ENCODE measurements at regions of chr7 and their contacts with region 1.

Region 1: GRCh38 chr7:38257350-38257677 is 16.1 kb downstream of the TARP start:
- DNase-seq: no peak
- H3K4me3 Mint-ChIP-seq: no peak overlapping the region
- H3K27ac Mint-ChIP-seq: no peak overlapping the region
- H3K4me1 Mint-ChIP-seq: no peaks in the 10 kb centered on the region
- H3K27me3 Mint-ChIP-seq: peaks cover 84% of the 10 kb centered on the region
- CTCF ChIP-seq: no peak

Region 2: DNA sequence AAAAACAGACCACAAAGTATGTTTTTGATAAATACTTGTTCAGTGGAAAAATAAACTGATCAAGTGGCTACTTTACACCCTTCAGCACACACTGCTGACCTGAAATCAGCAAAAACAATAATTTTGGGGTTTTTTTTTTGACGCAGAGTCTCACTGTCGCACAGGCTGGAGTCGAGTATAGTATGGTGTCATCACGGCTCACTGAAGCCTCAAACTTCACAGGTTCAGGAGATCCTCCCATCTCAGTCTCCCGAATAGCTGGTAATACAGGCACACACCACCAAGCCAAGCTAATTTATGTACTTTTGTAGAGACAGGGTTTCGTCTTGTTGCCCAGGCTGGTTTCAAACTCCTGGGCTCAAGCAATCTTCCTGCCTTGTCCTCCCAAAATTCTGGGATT is 14.5 kb before region 1 on chr7:
- CTCF ChIA-PET with region 1: no interaction called
- POLR2A ChIA-PET with region 1: no interaction called
- intact Hi-C with region 1: no loop called
- DNase-seq: no peak
- H3K4me3 Mint-ChIP-seq: no peak overlapping the region
- H3K27ac Mint-ChIP-seq: no peak overlapping the region
- H3K4me1 Mint-ChIP-seq: no peaks in the 10 kb centered on the region
- H3K27me3 Mint-ChIP-seq: peaks cover 58% of the 10 kb centered on the region
- CTCF ChIP-seq: no peak

Region 3: GRCh38 chr7:38274486-38274885 is 17.2 kb after region 1 on chr7:
- CTCF ChIA-PET with region 1: no interaction called
- POLR2A ChIA-PET with region 1: no interaction called
- intact Hi-C with region 1: loop called (anchors 2 kb)
- DNase-seq: no peak
- H3K4me3 Mint-ChIP-seq: no peak overlapping the region
- H3K27ac Mint-ChIP-seq: no peak overlapping the region
- H3K4me1 Mint-ChIP-seq: no peaks in the 10 kb centered on the region
- H3K27me3 Mint-ChIP-seq: peaks cover 60% of the 10 kb centered on the region
- CTCF ChIP-seq: no peak

Measured in MCF 10A (cell line).